Mammary epithelial cell (primary cell): ENCODE measurements at regions of chr4 and their contacts with region 1.

Region 1: DNA sequence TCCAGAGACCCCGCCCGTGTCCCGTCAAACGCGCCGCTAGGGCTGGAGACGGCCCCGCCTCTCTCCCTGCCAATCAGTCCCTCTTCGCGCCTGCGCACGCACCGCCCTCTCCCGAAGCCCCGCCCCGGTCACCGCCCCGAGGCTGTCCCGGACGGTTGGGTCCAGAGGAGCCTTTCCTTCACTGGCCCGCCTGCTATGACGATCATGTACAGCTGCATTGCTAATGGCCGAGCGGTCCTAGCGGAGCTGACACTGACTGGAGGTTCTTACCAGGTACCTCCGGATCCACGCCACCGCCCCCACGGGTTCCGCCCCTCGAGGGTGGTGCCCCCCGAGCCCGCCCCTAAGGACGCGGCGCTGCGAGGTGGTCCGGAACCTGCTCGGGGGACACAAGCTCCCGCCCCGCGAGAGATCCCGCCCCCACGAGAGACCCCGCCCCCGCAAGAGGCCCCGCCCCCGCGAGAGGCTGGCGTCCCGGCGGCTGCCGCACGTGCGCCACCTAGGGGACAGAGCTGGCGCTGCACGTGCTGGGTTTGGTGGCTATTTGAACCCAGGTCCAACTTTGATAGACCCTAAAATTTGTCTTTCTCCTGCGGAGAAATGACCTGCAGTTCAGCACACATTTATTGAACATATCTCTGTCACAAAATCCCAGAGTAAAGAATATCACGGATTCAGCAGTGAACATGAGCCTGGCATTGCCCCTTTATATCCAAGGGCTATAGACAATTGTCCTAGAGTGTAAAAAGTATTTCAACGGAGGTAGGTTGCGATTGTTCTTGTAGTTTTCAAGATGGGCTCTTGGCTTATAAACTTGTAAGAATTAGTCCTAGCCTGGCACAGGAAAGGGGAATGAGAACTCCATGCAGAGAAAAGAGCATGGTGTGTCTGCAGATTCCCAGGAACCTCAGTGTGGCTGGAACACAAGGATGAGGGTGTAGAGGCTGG is 88.7 kb downstream of the HNRNPD start:
- DNase-seq: peak; percentile 100
- H3K4me3 ChIP-seq: peak overlapping the region; percentile 47 to 65 (median 60)
- H3K27ac ChIP-seq: no peak overlapping the region
- H3K4me1 ChIP-seq: no peaks in the 10 kb centered on the region
- H3K27me3 ChIP-seq: peaks cover 6% of the 10 kb centered on the region
- CTCF ChIP-seq: peak; percentile 58 to 94

Region 2: DNA sequence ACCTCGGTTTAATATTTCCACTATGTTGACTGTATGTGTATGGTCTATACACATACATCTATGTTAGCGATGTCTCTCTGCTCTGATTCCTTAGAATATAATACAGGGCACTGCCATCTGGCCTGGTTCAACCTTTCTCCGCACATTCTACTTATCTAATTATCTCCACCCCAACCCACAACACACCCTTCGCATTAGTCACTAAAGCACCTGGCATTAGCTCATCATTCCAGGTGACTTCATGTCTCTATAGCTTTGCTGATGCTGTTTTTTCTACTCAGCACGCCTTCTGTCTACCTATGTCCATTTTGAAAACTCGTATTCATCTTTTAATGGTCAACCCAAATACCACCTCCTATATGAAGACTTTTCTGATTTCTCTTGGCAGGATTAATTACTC is 388.2 kb before region 1 on chr4:
- CTCF ChIA-PET with region 1: interaction called, 11 read pairs
- dilution Hi-C with region 1: no loop called
- in situ Hi-C with region 1: no loop called
- intact Hi-C with region 1: no loop called
- DNase-seq: peak; percentile 90
- H3K4me3 ChIP-seq: no peak overlapping the region
- H3K27ac ChIP-seq: no peak overlapping the region
- H3K4me1 ChIP-seq: peaks cover 9% of the 10 kb centered on the region
- H3K27me3 ChIP-seq: no peaks in the 10 kb centered on the region
- CTCF ChIP-seq: no peak

Region 3: GRCh38 chr4:82360298-82361177 is 75.4 kb after region 1 on chr4:
- CTCF ChIA-PET with region 1: no interaction called
- dilution Hi-C with region 1: no loop called
- in situ Hi-C with region 1: no loop called
- intact Hi-C with region 1: no loop called
- DNase-seq: peak; percentile 20
- H3K4me3 ChIP-seq: no peak overlapping the region
- H3K27ac ChIP-seq: no peak overlapping the region
- H3K4me1 ChIP-seq: peaks cover 4% of the 10 kb centered on the region
- H3K27me3 ChIP-seq: no peaks in the 10 kb centered on the region
- CTCF ChIP-seq: peak; percentile 59